ENCODE measurements at regions of chr6 and their contacts with region 1.

Region 1: DNA sequence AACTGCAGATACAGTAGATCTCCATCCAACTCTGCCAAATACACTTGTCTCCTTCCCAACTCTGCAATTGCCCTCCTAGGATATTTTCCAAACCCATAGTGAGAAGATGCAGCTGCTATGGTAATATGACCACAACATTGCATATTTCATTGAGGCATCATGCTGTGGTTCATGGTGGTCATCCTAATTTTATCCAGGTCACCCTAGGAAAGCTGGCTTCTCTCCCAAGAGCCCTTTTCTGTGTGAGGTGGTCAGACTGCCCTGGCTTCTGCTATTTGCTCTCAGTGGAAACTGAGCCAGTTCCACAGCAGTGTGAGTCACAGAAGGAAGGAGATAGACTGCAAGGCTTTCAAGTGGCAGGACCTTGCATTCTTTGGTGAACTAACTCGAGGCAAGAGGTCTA is 5.5 kb downstream of the OGFRL1 start:
- DNase-seq: no peak
- ATAC-seq: peak; percentile 58 to 72 (median 66)
- H3K4me3 ChIP-seq: no peak overlapping the region
- H3K27ac ChIP-seq: no peak overlapping the region
- H3K4me1 ChIP-seq: peaks cover 26% of the 10 kb centered on the region
- H3K27me3 ChIP-seq: no peaks in the 10 kb centered on the region
- CTCF ChIP-seq: no peak

Region 2: DNA sequence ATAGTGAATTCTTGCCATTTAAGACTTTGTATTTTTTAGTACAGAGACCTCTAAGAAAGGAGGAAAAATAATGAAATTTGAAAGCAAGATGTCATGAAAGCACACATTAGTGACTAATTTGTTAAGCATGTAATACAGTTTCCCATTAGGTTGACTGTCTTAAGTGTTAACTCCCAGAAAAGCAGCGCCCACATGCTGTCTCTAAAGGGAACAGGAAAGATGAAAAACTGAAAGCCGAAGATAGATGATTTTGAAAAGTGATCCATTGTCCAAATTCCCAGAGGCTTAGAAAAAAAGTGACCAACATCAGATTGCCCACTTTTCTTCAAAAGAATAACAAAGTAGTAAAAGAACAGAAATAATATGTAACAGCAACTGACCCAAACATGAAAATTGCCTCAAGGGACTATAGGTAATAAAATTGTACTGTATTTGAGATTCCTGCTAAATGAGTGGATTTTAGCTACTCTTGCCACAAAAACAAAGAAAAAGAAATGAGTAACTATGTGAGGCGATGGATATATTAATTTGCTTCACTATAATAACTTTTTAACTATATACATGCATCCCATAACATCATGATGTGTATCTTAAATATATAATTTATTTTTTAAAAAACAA is 88.7 kb before region 1 on chr6:
- intact Hi-C with region 1: no loop called
- DNase-seq: no peak
- ATAC-seq: no peak
- H3K4me3 ChIP-seq: no peak overlapping the region
- H3K27ac ChIP-seq: no peak overlapping the region
- H3K4me1 ChIP-seq: no peaks in the 10 kb centered on the region
- H3K27me3 ChIP-seq: no peaks in the 10 kb centered on the region
- CTCF ChIP-seq: no peak

Region 3: DNA sequence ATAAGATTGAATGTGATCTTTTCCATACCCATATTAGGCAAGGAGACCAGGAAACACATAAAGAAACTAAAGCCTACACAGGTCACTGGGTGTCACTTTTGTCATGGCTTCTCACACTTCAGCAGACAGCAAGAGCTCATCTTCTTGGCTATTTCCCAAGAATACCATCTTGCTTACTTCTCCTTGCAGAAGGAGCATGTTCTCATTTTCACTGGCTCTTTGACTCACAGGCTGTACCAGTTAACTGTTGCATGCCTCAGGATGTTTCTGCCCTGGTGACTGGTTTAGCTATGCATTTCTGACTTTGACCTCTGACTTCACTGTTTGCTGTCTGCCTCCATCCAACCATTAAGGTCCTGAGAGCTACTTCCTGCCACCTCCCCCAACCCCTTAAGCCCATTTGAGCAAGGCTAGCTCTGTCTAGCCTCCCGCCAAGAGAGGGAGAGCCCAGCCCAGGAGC is 45.8 kb before region 1 on chr6:
- intact Hi-C with region 1: loop called in 1 of 2 experiments (anchors 5 kb)
- DNase-seq: no peak
- ATAC-seq: peak in 3 of 4 donors; percentile 43 to 52 (median 49)
- H3K4me3 ChIP-seq: no peak overlapping the region
- H3K27ac ChIP-seq: no peak overlapping the region
- H3K4me1 ChIP-seq: no peaks in the 10 kb centered on the region
- H3K27me3 ChIP-seq: no peaks in the 10 kb centered on the region
- CTCF ChIP-seq: no peak

Measured in psoas muscle (tissue), 8 donors.